Right ventricle myocardium inferior (tissue), 1 donor: ENCODE measurements at regions of chr12 and their contacts with region 1.

Region 1: GRCh38 chr12:56117778-56118687 is at the start of gene ZC3H10:
- DNase-seq: peak; percentile 98
- ATAC-seq: peak; percentile 87
- total RNA-seq, gene ZC3H10: 7.3 TPM

Region 2: DNA sequence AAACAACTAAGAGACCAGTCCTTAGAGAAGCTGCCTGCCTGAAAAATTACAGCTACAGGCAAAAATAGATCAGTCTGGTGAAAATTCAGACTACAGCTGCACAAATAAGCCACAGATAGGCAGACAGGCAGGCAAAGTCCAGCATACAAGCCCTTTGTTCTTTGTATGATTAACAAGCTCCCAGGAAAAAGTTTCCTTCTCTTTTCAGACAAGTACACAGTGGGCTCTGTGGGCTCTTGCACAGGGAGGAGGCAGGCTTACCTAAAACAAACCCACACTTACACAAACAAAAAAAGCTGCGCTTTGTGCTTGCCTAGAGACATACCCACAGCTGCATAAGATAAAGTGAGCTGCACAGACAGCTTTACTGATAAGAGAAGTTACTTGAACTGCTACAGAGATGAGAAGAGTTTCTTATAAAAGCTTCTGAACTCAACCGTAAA is 618.2 kb before region 1 on chr12:
- intact Hi-C with region 1: no loop called
- DNase-seq: no peak
- ATAC-seq: no peak

Region 3: GRCh38 chr12:55619354-55620138 is 498.5 kb before region 1 on chr12:
- intact Hi-C with region 1: no loop called
- DNase-seq: no peak
- ATAC-seq: peak; percentile 91

Region 4: GRCh38 chr12:55738123-55739024 is 379.7 kb before region 1 on chr12:
- intact Hi-C with region 1: loop called (anchors 5 kb)
- DNase-seq: peak; percentile 90
- ATAC-seq: peak; percentile 82

Region 5: GRCh38 chr12:56078990-56079664 is 38.9 kb before region 1 on chr12:
- intact Hi-C with region 1: loop called (anchors 1 kb)
- DNase-seq: peak; percentile 89
- ATAC-seq: peak; percentile 87

Region 6: DNA sequence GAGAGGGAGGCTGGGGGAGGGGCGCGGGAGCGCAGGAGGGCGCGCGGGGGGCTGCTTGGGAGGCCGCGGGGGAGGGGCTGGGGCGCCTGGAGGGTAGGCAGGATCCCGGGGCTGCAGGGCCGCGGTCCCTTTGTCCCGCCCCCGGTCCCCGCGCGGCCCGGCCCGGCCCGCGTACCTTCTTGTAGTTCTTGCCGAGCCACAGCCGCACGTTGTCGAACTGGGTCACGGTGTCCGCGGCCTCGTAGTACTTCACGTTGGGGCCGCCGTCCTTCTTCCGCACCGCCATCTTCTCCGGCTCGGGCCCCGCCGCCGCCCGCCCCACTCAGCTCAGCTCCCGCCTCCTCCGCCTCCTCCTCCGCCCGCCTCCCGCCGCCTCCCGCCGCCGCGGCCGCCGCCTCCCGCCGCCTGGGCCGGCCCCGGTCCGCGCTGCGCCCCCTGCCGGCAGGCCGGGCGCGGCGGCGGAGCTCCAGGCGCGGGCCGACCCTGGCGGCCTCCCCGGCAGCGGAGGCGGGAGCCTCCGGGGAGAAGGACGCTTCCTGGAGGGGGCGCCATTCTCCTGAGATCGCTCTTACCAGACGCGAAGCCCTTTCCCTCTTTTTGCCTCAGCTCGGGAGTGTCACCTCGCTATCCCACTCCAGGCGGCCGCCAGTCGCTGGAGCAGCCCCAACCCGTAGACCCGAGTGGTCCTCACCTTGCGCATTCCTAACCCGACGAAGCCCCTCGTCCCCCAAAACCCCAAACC is 71.3 kb after region 1 on chr12 and contains the start of gene SMARCC2:
- intact Hi-C with region 1: loop called (anchors 1 kb)
- DNase-seq: peak; percentile 90
- ATAC-seq: peak; percentile 89
- total RNA-seq, gene SMARCC2: 68.8 TPM

Region 7: DNA sequence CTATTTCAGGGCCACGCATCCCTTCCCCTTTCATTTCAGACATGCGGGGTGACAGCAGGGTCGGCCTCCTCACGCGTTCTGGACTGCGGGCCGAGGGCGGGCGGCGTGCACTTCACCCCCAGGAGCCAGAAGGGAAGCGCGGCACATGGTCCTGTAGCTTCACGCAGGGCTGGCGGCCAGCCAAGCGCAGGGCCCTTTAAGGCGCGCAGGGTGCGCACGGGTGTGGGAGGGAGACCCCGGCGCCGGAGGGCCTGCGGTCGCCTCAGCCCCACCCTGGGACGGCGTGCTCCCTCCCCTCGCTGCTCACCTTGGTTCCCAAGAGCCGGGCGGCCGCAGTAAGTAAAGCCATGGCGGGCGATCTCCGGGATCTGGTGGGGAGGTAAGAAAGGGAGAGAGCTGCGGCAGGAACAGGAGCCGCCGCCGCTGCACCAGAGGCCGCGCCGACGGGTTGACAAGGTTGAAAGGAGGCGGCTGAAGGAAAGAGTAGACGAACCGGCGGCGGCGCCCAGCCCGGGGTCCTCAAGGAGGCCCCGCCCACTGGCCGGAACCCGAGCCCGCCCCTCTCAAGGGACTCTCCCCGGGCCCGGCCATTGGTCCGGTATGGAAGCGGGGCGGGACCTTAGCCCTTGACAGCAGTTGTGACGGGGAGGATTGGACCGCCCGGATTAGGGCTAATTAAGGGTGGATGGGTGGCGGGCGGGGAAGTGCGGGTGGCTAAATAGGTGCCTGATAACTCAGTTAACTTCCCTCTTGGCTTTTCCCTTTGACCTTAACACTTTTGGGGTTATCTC is 182.0 kb after region 1 on chr12 and contains the start of gene CS:
- intact Hi-C with region 1: loop called (anchors 2 kb)
- DNase-seq: peak; percentile 100
- ATAC-seq: peak; percentile 98
- total RNA-seq, gene CS: 799 TPM